Activated CD8-positive, alpha-beta T cell treated with anti-CD3 and anti-CD28 coated beads for 36 hours (primary cell): ENCODE measurements at regions of chr14 and their contacts with region 1.

Region 1: GRCh38 chr14:51979088-51979709 is 10.1 kb upstream of the RTRAF start:
- DNase-seq: peak; percentile 90
- ATAC-seq: peak; percentile 70
- H3K4me3 Mint-ChIP-seq: no peak overlapping the region
- H3K27ac Mint-ChIP-seq: no peak overlapping the region
- H3K4me1 Mint-ChIP-seq: peaks cover 7% of the 10 kb centered on the region
- H3K27me3 Mint-ChIP-seq: no peaks in the 10 kb centered on the region
- CTCF ChIP-seq: peak; percentile 96

Region 2: GRCh38 chr14:51534625-51535024 is 444.6 kb before region 1 on chr14:
- CTCF ChIA-PET with region 1: no interaction called
- POLR2A ChIA-PET with region 1: no interaction called
- intact Hi-C with region 1: no loop called
- DNase-seq: no peak
- ATAC-seq: no peak
- H3K4me3 Mint-ChIP-seq: no peak overlapping the region
- H3K27ac Mint-ChIP-seq: no peak overlapping the region
- H3K4me1 Mint-ChIP-seq: no peaks in the 10 kb centered on the region
- H3K27me3 Mint-ChIP-seq: peaks cover 3% of the 10 kb centered on the region
- CTCF ChIP-seq: no peak

Region 3: DNA sequence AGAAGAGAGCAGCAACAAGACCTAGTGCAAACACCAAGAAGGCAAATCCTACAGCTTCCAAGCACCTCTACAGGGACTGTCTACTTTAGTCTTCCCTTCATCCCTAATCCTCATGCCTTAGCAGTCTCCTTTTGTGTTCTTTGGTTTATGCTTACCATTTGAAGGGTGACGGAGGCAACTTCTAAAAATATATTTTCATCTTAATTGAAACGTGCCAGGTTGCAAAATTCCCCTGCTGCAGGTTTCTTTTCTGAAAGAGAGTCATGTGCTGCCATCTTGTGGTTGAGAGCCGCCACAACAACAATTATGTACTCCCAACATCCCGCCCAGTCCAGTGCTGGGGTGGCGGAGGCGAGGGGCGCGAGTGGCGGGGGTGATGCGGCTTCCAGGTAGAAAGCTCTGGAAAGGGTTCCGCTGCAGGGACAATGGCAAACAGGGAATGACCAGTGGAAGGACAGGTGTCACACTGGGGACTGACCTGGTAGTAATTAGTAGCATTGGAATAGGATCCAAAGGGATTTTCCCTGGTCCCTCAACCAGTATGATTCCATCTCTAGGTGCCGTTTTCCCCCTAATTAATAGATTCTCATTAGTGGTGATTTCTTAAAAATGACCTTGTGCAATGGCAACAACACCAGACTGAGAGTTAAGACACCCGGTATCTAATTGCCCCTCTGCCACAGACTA is 199.1 kb before region 1 on chr14:
- CTCF ChIA-PET with region 1: interaction called, 99 read pairs
- POLR2A ChIA-PET with region 1: no interaction called
- intact Hi-C with region 1: no loop called
- DNase-seq: peak; percentile 88
- ATAC-seq: peak; percentile 70
- H3K4me3 Mint-ChIP-seq: no peak overlapping the region
- H3K27ac Mint-ChIP-seq: no peak overlapping the region
- H3K4me1 Mint-ChIP-seq: peaks cover 25% of the 10 kb centered on the region
- H3K27me3 Mint-ChIP-seq: peaks cover 2% of the 10 kb centered on the region
- CTCF ChIP-seq: peak; percentile 93

Region 4: GRCh38 chr14:51846631-51847488 is 132.3 kb before region 1 on chr14:
- CTCF ChIA-PET with region 1: interaction called, 5 read pairs
- POLR2A ChIA-PET with region 1: interaction called, 3 read pairs
- intact Hi-C with region 1: loop called (anchors 5 kb)
- DNase-seq: peak; percentile 95
- ATAC-seq: peak; percentile 76
- H3K4me3 Mint-ChIP-seq: peak overlapping the region; percentile 82
- H3K27ac Mint-ChIP-seq: peak overlapping the region; percentile 97
- H3K4me1 Mint-ChIP-seq: peaks cover 69% of the 10 kb centered on the region
- H3K27me3 Mint-ChIP-seq: no peaks in the 10 kb centered on the region
- CTCF ChIP-seq: no peak

Region 5: DNA sequence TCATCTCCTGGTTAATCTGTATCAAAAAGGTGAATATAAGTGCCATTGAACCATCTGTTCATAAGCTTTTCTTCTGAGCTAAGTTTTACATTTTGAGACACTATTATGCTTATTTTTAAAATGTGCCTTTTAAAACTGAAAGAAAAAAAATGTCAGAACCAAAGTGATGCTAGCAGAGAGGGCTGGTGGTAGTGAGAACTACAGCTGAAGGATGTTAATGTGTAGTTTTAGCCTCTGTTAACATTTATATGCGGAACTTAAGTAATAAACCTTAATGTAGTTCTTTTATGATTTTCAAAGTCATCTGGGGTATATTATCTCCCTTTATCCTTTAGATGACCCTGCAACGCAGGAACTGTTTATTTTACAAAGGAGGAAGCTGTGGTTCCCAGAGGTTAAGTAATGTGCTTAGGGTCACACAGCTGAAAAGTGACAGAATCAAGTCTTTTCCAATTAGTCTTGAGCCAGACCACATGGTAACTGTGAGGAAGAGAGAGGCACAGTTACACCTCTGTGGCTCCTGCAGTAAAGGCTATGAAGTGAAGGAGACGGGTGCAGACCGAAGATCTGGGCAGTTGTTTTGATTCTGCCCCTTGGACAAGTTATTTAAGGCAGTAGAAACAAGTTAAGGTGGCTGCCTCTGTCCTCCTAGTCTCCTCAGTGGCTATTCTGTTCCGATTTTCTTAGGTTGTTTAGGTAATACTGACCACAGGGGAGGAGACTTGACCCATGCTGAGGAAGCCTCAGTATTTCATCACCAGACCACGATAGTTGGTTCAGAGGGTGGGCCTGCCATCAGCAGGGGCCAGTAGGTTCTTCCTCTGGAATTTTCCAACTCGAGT is 94.9 kb before region 1 on chr14:
- CTCF ChIA-PET with region 1: interaction called, 16 read pairs
- POLR2A ChIA-PET with region 1: no interaction called
- intact Hi-C with region 1: no loop called
- DNase-seq: peak; percentile 20
- ATAC-seq: peak; percentile 57
- H3K4me3 Mint-ChIP-seq: peak overlapping the region; percentile 55
- H3K27ac Mint-ChIP-seq: peak overlapping the region; percentile 80
- H3K4me1 Mint-ChIP-seq: peaks cover 75% of the 10 kb centered on the region
- H3K27me3 Mint-ChIP-seq: no peaks in the 10 kb centered on the region
- CTCF ChIP-seq: no peak

Region 6: DNA sequence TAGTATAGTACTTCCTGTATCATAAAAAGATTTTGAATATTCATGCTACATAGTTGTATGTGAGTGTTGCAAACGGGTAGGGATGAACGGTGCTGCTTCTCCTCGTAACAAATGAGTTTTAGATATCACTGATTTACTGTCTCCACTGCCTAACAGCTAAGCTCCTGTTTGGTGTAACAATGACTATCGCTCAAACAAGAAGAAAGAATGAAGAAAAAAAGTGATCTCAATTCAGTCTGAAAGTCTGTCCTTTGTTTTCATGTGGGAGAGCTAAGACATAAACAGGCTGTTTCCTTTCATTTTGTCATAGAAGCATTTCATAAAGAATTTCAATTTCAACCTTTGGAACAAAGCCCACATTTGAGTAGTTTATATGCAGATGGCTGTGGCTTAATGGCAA is 15.9 kb before region 1 on chr14:
- CTCF ChIA-PET with region 1: interaction called, 55 read pairs
- POLR2A ChIA-PET with region 1: no interaction called
- intact Hi-C with region 1: no loop called
- DNase-seq: no peak
- ATAC-seq: no peak
- H3K4me3 Mint-ChIP-seq: peak overlapping the region; percentile 11
- H3K27ac Mint-ChIP-seq: peak overlapping the region; percentile 62
- H3K4me1 Mint-ChIP-seq: peaks cover 45% of the 10 kb centered on the region
- H3K27me3 Mint-ChIP-seq: no peaks in the 10 kb centered on the region
- CTCF ChIP-seq: no peak

Region 7: GRCh38 chr14:52011523-52011922 is 32.3 kb after region 1 on chr14:
- CTCF ChIA-PET with region 1: no interaction called
- POLR2A ChIA-PET with region 1: no interaction called
- intact Hi-C with region 1: no loop called
- DNase-seq: no peak
- ATAC-seq: no peak
- H3K4me3 Mint-ChIP-seq: no peak overlapping the region
- H3K27ac Mint-ChIP-seq: no peak overlapping the region
- H3K4me1 Mint-ChIP-seq: no peaks in the 10 kb centered on the region
- H3K27me3 Mint-ChIP-seq: peaks cover 3% of the 10 kb centered on the region
- CTCF ChIP-seq: no peak